ENCODE measurements at regions of chr20 and their contacts with region 1.

Region 1: GRCh38 chr20:36754656-36755222 is 8.8 kb upstream of the NDRG3 start:
- DNase-seq: peak in 3 of 5 donors; percentile 36 to 61 (median 40)
- H3K4me3 ChIP-seq: no peak overlapping the region
- H3K4me3 Mint-ChIP-seq: no peak overlapping the region
- H3K27ac ChIP-seq: no peak overlapping the region
- H3K27ac Mint-ChIP-seq: peak overlapping the region in 3 of 8 donors; percentile 19 to 72 (median 29)
- H3K4me1 ChIP-seq: no peaks in the 10 kb centered on the region
- H3K4me1 Mint-ChIP-seq: peaks cover 3 to 6% (median 4%) of the 10 kb centered on the region in 3 donors
- H3K27me3 ChIP-seq: no peaks in the 10 kb centered on the region
- H3K27me3 Mint-ChIP-seq: no peaks in the 10 kb centered on the region

Region 2: GRCh38 chr20:36611625-36612024 is 143.1 kb before region 1 on chr20:
- CTCF ChIA-PET with region 1: interaction called, 21 read pairs
- POLR2A ChIA-PET with region 1: no interaction called
- DNase-seq: no peak
- H3K4me3 ChIP-seq: no peak overlapping the region
- H3K4me3 Mint-ChIP-seq: no peak overlapping the region
- H3K27ac ChIP-seq: no peak overlapping the region
- H3K27ac Mint-ChIP-seq: peak overlapping the region in 3 of 8 donors; percentile 23 to 75 (median 50)
- H3K4me1 ChIP-seq: peaks cover 17% of the 10 kb centered on the region
- H3K4me1 Mint-ChIP-seq: peaks cover 21 to 62% (median 25%) of the 10 kb centered on the region in 3 donors
- H3K27me3 ChIP-seq: no peaks in the 10 kb centered on the region
- H3K27me3 Mint-ChIP-seq: peaks cover 0 to 2% of the 10 kb centered on the region in 2 donors

Region 3: DNA sequence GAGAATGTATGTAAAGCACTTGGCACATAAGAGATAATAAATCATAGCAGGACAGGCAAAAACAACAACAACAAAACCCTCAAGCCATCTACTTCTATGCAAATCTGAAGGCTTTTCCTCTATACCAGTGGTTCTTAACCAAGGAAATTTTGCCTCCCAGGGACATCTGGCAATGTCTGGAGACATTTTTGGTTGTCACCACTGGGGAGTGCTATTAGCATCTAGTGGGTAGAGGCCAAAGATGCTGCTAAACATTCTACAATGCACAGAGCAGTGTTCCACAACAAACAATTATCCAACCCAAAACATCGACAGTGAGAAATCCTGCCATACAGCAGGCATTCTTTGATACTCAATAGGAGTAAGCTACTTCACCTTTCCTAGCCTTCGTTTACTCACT is 37.1 kb before region 1 on chr20:
- CTCF ChIA-PET with region 1: interaction called, 23 read pairs
- POLR2A ChIA-PET with region 1: no interaction called
- DNase-seq: peak in 2 of 5 donors; percentile 7 to 50
- H3K4me3 ChIP-seq: no peak overlapping the region
- H3K4me3 Mint-ChIP-seq: no peak overlapping the region
- H3K27ac ChIP-seq: no peak overlapping the region
- H3K27ac Mint-ChIP-seq: peak overlapping the region in 1 of 8 donors; percentile 14
- H3K4me1 ChIP-seq: no peaks in the 10 kb centered on the region
- H3K4me1 Mint-ChIP-seq: peaks cover 0 to 5% (median 3%) of the 10 kb centered on the region in 3 donors
- H3K27me3 ChIP-seq: no peaks in the 10 kb centered on the region
- H3K27me3 Mint-ChIP-seq: no peaks in the 10 kb centered on the region

Region 4: GRCh38 chr20:36732456-36732855 is 22.3 kb before region 1 on chr20:
- CTCF ChIA-PET with region 1: interaction called, 15 read pairs
- POLR2A ChIA-PET with region 1: interaction called, 4 read pairs
- DNase-seq: no peak
- H3K4me3 ChIP-seq: no peak overlapping the region
- H3K4me3 Mint-ChIP-seq: no peak overlapping the region
- H3K27ac ChIP-seq: no peak overlapping the region
- H3K27ac Mint-ChIP-seq: peak overlapping the region in 2 of 8 donors; percentile 72 to 87
- H3K4me1 ChIP-seq: peaks cover 15% of the 10 kb centered on the region
- H3K4me1 Mint-ChIP-seq: peaks cover 19 to 52% (median 32%) of the 10 kb centered on the region in 3 donors
- H3K27me3 ChIP-seq: no peaks in the 10 kb centered on the region
- H3K27me3 Mint-ChIP-seq: no peaks in the 10 kb centered on the region